ENCODE measurements at regions of chr12 and their contacts with region 1.

Region 1: GRCh38 chr12:30806989-30807694 is 52.4 kb upstream of the CAPRIN2 start:
- DNase-seq: peak; percentile 76
- ATAC-seq: peak; percentile 98
- H3K4me3 ChIP-seq: no peak overlapping the region
- H3K27ac ChIP-seq: no peak overlapping the region
- H3K4me1 ChIP-seq: peaks cover 3% of the 10 kb centered on the region; the same call in 1 of the 2 replicates
- H3K27me3 ChIP-seq: no peaks in the 10 kb centered on the region
- CTCF ChIP-seq: peak; percentile 93
- POLR2A ChIP-seq: no peak
- RAD21 ChIP-seq: peak; percentile 97

Region 2: DNA sequence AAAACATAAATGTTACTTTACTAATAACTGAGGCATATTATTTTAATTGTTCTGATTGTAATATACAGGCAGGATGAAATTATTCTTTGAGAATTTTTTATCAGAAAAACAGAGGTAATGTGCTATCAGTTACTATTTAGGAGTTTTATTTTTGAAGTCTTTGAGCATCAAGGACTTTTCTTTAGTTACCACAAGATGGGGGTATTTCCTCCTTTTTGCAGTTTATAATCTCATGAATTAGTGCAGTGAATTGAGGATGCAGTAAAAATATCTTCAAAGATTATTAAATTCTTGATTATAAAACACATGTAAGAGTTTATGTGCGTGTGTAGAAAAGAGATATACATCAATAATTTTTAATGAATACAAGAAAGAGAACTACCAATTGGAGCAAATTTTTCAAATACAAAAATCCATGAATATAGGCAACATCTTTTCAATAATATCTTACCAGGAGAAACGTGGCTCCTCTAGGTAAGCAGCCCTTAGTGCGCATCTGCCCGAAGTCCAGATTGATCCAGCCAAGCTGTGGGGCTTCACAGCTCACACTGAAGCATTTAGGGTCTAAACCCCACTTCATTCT is 1497.7 kb before region 1 on chr12:
- CTCF ChIA-PET with region 1: no interaction called
- POLR2A ChIA-PET with region 1: no interaction called
- dilution Hi-C with region 1: no loop called
- in situ Hi-C with region 1: no loop called
- intact Hi-C with region 1: loop called (anchors 5 kb)
- DNase-seq: peak; percentile 47
- ATAC-seq: 0 out of 2 replicates have a peak, but pooled peaks have one; percentile 29
- H3K4me3 ChIP-seq: no peak overlapping the region
- H3K27ac ChIP-seq: no peak overlapping the region
- H3K4me1 ChIP-seq: no peaks in the 10 kb centered on the region
- H3K27me3 ChIP-seq: no peaks in the 10 kb centered on the region
- CTCF ChIP-seq: peak; percentile 67
- POLR2A ChIP-seq: no peak
- RAD21 ChIP-seq: peak; percentile 67

Region 3: DNA sequence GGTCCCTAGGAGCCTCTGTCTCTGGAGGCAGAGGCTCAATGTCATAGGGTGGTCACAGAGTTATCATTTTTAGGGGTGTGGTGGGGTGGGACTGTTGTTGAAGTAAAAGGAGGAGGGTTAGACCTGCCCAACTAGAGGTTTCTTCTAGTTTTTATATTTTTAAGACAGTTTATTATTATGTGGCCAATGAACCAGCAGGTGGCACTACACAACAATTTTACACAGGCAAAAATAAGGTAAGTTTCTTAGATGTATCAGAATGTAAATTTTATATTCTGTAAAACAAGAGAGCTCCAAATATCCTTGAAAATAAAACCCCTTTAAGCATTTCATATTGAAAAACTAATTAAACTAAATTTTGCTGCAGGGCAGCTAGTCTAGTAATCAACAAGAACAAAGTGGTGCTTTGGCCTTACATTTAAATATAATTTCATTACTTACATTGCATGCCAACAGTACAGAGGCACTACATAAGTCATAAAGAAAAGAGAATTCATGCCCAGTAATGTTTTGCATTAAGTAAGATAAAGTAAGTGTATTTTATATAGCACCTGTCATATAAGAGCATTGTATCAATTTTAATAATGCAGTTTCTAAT is 1287.5 kb before region 1 on chr12:
- CTCF ChIA-PET with region 1: no interaction called
- POLR2A ChIA-PET with region 1: no interaction called
- dilution Hi-C with region 1: no loop called
- in situ Hi-C with region 1: loop called (anchors 25 kb)
- intact Hi-C with region 1: loop called (anchors 1 kb)
- DNase-seq: peak; percentile 68
- ATAC-seq: peak; percentile 31
- H3K4me3 ChIP-seq: no peak overlapping the region
- H3K27ac ChIP-seq: no peak overlapping the region
- H3K4me1 ChIP-seq: peaks cover 5% of the 10 kb centered on the region
- H3K27me3 ChIP-seq: no peaks in the 10 kb centered on the region
- CTCF ChIP-seq: peak; percentile 68
- POLR2A ChIP-seq: no peak
- RAD21 ChIP-seq: peak; percentile 76

Region 4: DNA sequence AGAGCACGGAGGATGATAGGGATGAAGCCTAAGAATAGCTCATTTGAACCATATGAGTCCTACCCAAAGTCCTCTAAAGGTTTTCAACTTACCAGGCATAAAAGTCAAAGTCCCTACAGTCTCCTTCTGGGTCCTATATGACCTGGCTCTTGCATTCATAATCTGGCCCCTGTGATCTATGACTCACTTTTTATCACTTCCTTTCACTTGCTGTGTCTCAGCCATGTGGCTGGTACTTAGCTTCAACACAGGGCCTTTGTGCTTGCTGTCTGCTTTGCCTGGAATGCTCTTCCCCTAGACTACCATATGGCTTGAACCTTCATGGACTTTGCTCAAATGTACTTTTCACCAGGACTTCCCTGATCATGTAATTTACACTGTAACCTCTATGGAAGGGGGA is 885.8 kb before region 1 on chr12:
- CTCF ChIA-PET with region 1: no interaction called
- POLR2A ChIA-PET with region 1: no interaction called
- dilution Hi-C with region 1: no loop called
- in situ Hi-C with region 1: no loop called
- intact Hi-C with region 1: loop called (anchors 10 kb)
- DNase-seq: peak; percentile 26
- ATAC-seq: peak; percentile 46
- H3K4me3 ChIP-seq: no peak overlapping the region
- H3K27ac ChIP-seq: no peak overlapping the region
- H3K4me1 ChIP-seq: no peaks in the 10 kb centered on the region
- H3K27me3 ChIP-seq: no peaks in the 10 kb centered on the region; the same call in 1 of the 2 replicates
- CTCF ChIP-seq: no peak
- POLR2A ChIP-seq: no peak
- RAD21 ChIP-seq: no peak

Region 5: DNA sequence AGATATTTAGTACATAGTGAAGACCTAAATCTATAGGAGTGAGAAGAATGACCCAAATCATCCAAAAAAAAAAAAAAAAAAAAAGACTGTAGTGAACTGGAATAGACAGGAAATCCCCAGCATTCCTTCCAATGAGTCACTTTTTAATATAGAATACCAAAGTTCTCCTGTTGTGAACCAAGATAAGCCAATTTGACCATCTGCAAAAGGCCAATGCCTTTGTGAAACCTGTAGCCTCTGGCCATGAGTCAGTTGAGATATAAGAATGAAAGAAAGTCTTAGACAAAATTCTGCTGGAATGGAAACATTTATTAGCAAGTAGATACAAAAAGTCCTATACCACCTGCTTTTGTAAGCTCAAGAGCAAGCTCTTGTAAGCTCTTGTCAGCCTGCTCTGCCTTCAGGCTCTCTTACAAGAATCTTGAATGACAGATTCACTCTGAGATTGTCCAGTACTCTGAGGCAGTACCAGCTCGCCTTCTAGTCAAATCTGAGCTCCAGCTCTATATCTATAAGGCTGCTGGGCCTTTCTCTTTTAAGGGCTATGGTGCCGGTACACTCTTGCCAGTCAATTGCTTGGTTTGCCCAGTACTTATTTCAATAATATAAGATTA is 780.4 kb before region 1 on chr12:
- CTCF ChIA-PET with region 1: no interaction called
- POLR2A ChIA-PET with region 1: no interaction called
- dilution Hi-C with region 1: no loop called
- in situ Hi-C with region 1: no loop called
- intact Hi-C with region 1: loop called (anchors 10 kb)
- DNase-seq: peak; percentile 89
- ATAC-seq: peak; percentile 82
- H3K4me3 ChIP-seq: no peak overlapping the region
- H3K27ac ChIP-seq: peak overlapping the region; percentile 17; the same call in 1 of the 2 replicates
- H3K4me1 ChIP-seq: peaks cover 4% of the 10 kb centered on the region
- H3K27me3 ChIP-seq: no peaks in the 10 kb centered on the region
- CTCF ChIP-seq: no peak
- POLR2A ChIP-seq: no peak
- RAD21 ChIP-seq: no peak

Region 6: DNA sequence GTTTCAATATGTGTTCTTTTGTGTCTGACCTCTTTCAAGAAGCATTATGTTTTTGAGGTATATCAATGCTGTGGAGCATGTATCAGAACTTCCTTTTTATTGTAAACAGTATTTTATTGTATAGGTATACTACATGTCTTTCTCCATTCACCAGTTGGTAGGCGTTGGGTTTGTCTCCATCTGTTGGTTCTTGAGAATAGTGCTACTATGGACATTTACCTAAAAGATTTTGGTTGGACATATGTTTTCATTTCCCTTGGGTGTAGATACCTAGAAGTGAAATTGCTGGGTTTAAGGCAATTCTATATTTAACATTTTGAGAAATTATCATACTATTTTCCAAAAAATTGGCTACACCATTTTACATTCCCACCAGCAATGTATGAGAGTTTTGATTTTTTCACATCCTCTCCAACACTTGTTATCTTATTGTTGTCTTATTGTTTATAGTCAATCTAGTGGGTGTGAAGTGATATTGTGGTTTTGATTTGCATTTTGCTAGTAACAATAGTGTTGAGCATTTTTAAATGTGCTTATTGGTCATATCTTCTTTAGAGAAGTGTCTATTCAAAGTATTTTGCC is 520.7 kb before region 1 on chr12:
- CTCF ChIA-PET with region 1: no interaction called
- POLR2A ChIA-PET with region 1: no interaction called
- dilution Hi-C with region 1: no loop called
- in situ Hi-C with region 1: no loop called
- intact Hi-C with region 1: loop called (anchors 10 kb)
- DNase-seq: peak; percentile 42
- ATAC-seq: peak; percentile 75
- H3K4me3 ChIP-seq: no peak overlapping the region
- H3K27ac ChIP-seq: no peak overlapping the region
- H3K4me1 ChIP-seq: no peaks in the 10 kb centered on the region
- H3K27me3 ChIP-seq: no peaks in the 10 kb centered on the region
- CTCF ChIP-seq: peak; percentile 62
- POLR2A ChIP-seq: no peak
- RAD21 ChIP-seq: peak; percentile 72

Region 7: DNA sequence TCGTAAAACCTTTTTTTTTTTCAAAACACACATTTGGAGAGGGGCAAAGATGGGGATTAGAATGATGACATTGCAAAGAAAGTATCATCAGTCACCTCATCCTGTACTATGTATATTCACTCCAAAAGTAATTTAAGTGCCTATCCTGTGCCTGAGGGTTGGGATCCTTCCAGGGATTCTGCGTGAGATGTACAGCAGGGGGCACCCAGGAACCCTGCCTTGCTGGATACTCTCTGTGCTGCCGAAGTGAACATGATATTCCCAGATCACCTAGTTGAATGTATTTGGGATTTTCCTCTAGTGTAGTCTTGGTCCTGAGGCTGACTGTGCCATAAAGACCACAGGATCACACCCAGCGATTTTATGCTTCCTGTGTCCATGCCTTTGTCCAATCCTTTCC is 484.1 kb before region 1 on chr12:
- CTCF ChIA-PET with region 1: no interaction called
- POLR2A ChIA-PET with region 1: no interaction called
- dilution Hi-C with region 1: no loop called
- in situ Hi-C with region 1: loop called (anchors 25 kb)
- intact Hi-C with region 1: no loop called
- DNase-seq: no peak
- ATAC-seq: no peak
- H3K4me3 ChIP-seq: no peak overlapping the region
- H3K27ac ChIP-seq: no peak overlapping the region
- H3K4me1 ChIP-seq: no peaks in the 10 kb centered on the region
- H3K27me3 ChIP-seq: no peaks in the 10 kb centered on the region
- CTCF ChIP-seq: no peak
- POLR2A ChIP-seq: no peak
- RAD21 ChIP-seq: no peak

Region 8: GRCh38 chr12:30473274-30473673 is 333.9 kb before region 1 on chr12:
- CTCF ChIA-PET with region 1: no interaction called
- POLR2A ChIA-PET with region 1: no interaction called
- dilution Hi-C with region 1: no loop called
- in situ Hi-C with region 1: no loop called
- intact Hi-C with region 1: no loop called
- DNase-seq: no peak
- ATAC-seq: no peak
- H3K4me3 ChIP-seq: no peak overlapping the region
- H3K27ac ChIP-seq: no peak overlapping the region
- H3K4me1 ChIP-seq: no peaks in the 10 kb centered on the region
- H3K27me3 ChIP-seq: no peaks in the 10 kb centered on the region
- CTCF ChIP-seq: no peak
- POLR2A ChIP-seq: no peak
- RAD21 ChIP-seq: no peak

Region 9: DNA sequence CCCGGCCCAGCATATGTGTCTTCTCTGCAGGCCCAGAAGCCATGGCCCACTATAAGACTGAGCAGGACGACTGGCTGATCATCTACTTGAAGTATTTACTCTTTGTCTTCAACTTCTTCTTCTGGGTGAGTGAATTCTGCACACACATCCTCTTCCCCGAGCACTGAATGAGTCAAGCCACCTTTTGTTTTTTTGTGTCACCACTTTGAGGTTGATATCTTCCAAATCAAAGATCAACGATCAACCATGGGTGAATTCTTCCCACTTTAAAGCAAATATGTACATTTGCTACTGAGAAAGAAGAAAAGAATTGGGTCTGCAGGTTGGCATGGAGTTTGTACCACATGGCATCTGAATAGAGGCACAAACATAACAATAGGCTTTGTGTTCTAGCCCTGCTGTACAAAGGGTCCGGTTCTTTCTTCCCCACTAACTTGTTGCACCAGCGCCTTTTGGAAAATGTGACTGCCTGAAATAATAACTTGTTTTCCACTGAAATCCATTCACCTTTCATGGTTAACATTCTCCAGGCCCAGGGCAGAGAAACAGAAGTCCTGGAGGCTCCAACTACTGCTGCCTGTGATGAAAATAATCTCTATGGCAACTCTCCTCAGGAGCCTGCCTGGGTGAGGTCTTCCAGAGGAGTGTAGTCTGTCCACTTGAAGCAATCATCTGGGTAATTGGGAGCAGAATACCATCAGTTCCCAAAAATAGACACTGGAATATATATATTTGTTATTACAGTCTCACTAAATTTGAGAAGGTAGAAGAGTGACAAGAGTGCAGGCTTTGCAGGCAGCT is 147.0 kb after region 1 on chr12:
- CTCF ChIA-PET with region 1: no interaction called
- POLR2A ChIA-PET with region 1: no interaction called
- dilution Hi-C with region 1: no loop called
- in situ Hi-C with region 1: no loop called
- intact Hi-C with region 1: no loop called
- DNase-seq: no peak
- ATAC-seq: no peak
- H3K4me3 ChIP-seq: no peak overlapping the region
- H3K27ac ChIP-seq: no peak overlapping the region
- H3K4me1 ChIP-seq: no peaks in the 10 kb centered on the region
- H3K27me3 ChIP-seq: peaks cover 4% of the 10 kb centered on the region
- CTCF ChIP-seq: no peak
- POLR2A ChIP-seq: no peak
- RAD21 ChIP-seq: no peak